Breast epithelium (tissue), 4 donors: ENCODE measurements at regions of chr3 and their contacts with region 1.

Region 1: GRCh38 chr3:190172751-190173150 is 52.1 kb upstream of the P3H2 start:
- DNase-seq: no peak
- H3K4me3 ChIP-seq: no peak overlapping the region
- H3K27ac ChIP-seq: no peak overlapping the region
- H3K4me1 ChIP-seq: no peaks in the 10 kb centered on the region
- H3K27me3 ChIP-seq: no peaks in the 10 kb centered on the region
- CTCF ChIP-seq: no peak
- POLR2A ChIP-seq: no peak

Region 2: GRCh38 chr3:190155752-190156151 is 17.0 kb before region 1 on chr3:
- intact Hi-C with region 1: loop called (anchors 2 kb)
- DNase-seq: no peak
- H3K4me3 ChIP-seq: no peak overlapping the region
- H3K27ac ChIP-seq: no peak overlapping the region
- H3K4me1 ChIP-seq: no peaks in the 10 kb centered on the region
- H3K27me3 ChIP-seq: no peaks in the 10 kb centered on the region
- CTCF ChIP-seq: no peak
- POLR2A ChIP-seq: no peak